ENCODE measurements at regions of chrX and their contacts with region 1.

Region 1: GRCh38 chrX:10007621-10008020 is 40.5 kb downstream of the CLDN34 start:
- DNase-seq: no peak
- ATAC-seq: peak; percentile 1; the same call in 2 of the 3 replicates
- H3K4me3 ChIP-seq: no peak overlapping the region
- H3K27ac ChIP-seq: no peak overlapping the region
- H3K4me1 ChIP-seq: peaks cover 9% of the 10 kb centered on the region
- H3K27me3 ChIP-seq: no peaks in the 10 kb centered on the region
- CTCF ChIP-seq: no peak
- EP300 ChIP-seq: no peak
- POLR2A ChIP-seq: no peak
- RAD21 ChIP-seq: no peak

Region 2: GRCh38 chrX:9829308-9830267 is 178.0 kb before region 1 on chrX:
- CTCF ChIA-PET with region 1: no interaction called
- POLR2A ChIA-PET with region 1: no interaction called
- RAD21 ChIA-PET with region 1: no interaction called
- SMC1A ChIA-PET with region 1: no interaction called
- in situ Hi-C with region 1: no loop called
- intact Hi-C with region 1: no loop called
- DNase-seq: peak; percentile 47
- ATAC-seq: peak; percentile 95
- H3K4me3 ChIP-seq: no peak overlapping the region
- H3K27ac ChIP-seq: peak overlapping the region; percentile 61
- H3K4me1 ChIP-seq: peaks cover 11% of the 10 kb centered on the region
- H3K27me3 ChIP-seq: no peaks in the 10 kb centered on the region; a peak in 2 of 4 replicates
- CTCF ChIP-seq: no peak
- EP300 ChIP-seq: peak; percentile 68 to 90; a peak in 2 of 4 replicates
- POLR2A ChIP-seq: no peak
- RAD21 ChIP-seq: no peak

Region 3: DNA sequence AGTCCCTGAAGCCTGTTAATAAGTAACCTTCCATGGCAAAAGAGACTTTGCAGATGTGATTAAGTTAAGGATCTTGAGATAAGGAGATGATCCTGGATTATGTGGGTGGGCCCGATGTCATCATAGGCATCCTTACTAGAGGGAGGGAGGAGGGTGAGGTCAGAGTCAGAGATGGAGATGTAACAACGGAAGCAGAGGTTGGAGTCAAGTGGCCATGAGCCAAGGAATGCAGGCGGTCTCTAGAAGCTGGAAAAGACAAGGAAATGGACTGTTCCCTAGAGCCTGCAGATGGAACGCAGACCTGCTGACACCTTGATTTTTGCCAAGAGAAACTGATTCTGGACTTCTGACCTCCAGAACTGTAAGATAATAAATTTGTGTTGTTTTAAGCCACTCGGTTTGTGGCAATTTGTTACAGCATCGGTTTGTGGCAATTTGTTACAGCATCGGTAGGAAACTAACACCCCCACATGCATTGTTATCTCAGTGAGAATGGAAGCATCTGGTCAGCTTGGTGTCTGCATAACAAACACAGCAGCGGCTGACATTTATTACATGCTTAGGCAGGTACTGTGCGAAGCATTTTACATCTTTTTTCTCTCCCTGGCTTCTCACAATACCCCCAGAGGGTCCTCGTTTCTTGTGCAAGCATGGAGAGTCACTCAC is 15.1 kb after region 1 on chrX:
- CTCF ChIA-PET with region 1: interaction called, 5 read pairs
- POLR2A ChIA-PET with region 1: interaction called, 7 read pairs
- RAD21 ChIA-PET with region 1: interaction called, 15 read pairs
- SMC1A ChIA-PET with region 1: interaction called, 16 read pairs
- in situ Hi-C with region 1: no loop called
- intact Hi-C with region 1: no loop called
- DNase-seq: no peak
- ATAC-seq: no peak
- H3K4me3 ChIP-seq: no peak overlapping the region
- H3K27ac ChIP-seq: no peak overlapping the region
- H3K4me1 ChIP-seq: no peaks in the 10 kb centered on the region
- H3K27me3 ChIP-seq: no peaks in the 10 kb centered on the region
- CTCF ChIP-seq: no peak
- EP300 ChIP-seq: no peak
- POLR2A ChIP-seq: no peak
- RAD21 ChIP-seq: no peak

Region 4: GRCh38 chrX:10039821-10040793 is 32.5 kb after region 1 on chrX:
- CTCF ChIA-PET with region 1: no interaction called
- POLR2A ChIA-PET with region 1: no interaction called
- RAD21 ChIA-PET with region 1: no interaction called
- SMC1A ChIA-PET with region 1: no interaction called
- in situ Hi-C with region 1: no loop called
- intact Hi-C with region 1: no loop called
- DNase-seq: no peak
- ATAC-seq: no peak
- H3K4me3 ChIP-seq: no peak overlapping the region
- H3K27ac ChIP-seq: no peak overlapping the region
- H3K4me1 ChIP-seq: no peaks in the 10 kb centered on the region
- H3K27me3 ChIP-seq: no peaks in the 10 kb centered on the region; a peak in 1 of 4 replicates
- CTCF ChIP-seq: no peak
- EP300 ChIP-seq: no peak
- POLR2A ChIP-seq: no peak
- RAD21 ChIP-seq: no peak

Region 5: GRCh38 chrX:10052906-10053625 is 45.4 kb after region 1 on chrX:
- CTCF ChIA-PET with region 1: no interaction called
- POLR2A ChIA-PET with region 1: no interaction called
- RAD21 ChIA-PET with region 1: interaction called, 10 read pairs
- SMC1A ChIA-PET with region 1: interaction called, 4 read pairs
- in situ Hi-C with region 1: no loop called
- intact Hi-C with region 1: no loop called
- DNase-seq: no peak
- ATAC-seq: peak; percentile 59
- H3K4me3 ChIP-seq: no peak overlapping the region
- H3K27ac ChIP-seq: no peak overlapping the region
- H3K4me1 ChIP-seq: no peaks in the 10 kb centered on the region
- H3K27me3 ChIP-seq: peaks cover 0 to 4% of the 10 kb centered on the region in 2 experiments; a peak in 1 of 4 replicates
- CTCF ChIP-seq: no peak
- EP300 ChIP-seq: no peak
- POLR2A ChIP-seq: no peak
- RAD21 ChIP-seq: no peak; the same call in 1 of the 2 replicates

Region 6: DNA sequence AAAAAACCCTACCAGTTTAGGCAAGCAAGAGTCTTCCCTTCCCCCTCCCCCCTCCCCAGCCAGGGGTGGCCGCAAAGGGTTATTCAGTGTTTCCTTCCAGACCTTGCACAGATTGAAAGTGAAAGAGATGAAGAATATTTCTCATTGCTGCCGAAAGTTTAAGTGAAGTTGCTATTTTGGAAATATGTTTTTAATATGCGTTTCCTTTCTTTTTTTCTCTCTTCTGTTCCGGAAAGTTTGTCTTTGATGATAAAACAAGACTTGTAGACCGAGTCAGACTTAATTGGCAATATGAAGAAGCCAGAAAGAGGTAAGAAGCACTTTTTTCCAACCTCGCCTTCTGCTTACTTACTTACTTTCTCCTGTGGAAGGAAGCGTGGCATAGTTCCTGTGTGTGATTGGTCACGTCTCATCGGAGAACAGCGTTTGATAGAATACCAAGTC is 90.7 kb after region 1 on chrX:
- CTCF ChIA-PET with region 1: interaction called, 17 read pairs
- POLR2A ChIA-PET with region 1: interaction called, 16 read pairs
- RAD21 ChIA-PET with region 1: interaction called, 24 read pairs
- SMC1A ChIA-PET with region 1: interaction called, 21 read pairs
- in situ Hi-C with region 1: no loop called
- intact Hi-C with region 1: no loop called
- DNase-seq: peak; percentile 51
- ATAC-seq: peak; percentile 87
- H3K4me3 ChIP-seq: peak overlapping the region; percentile 50
- H3K27ac ChIP-seq: peak overlapping the region; percentile 77
- H3K4me1 ChIP-seq: peaks cover 11% of the 10 kb centered on the region
- H3K27me3 ChIP-seq: no peaks in the 10 kb centered on the region; a peak in 1 of 4 replicates
- CTCF ChIP-seq: no peak
- EP300 ChIP-seq: peak in 1 of 2 experiments; percentile 63; a peak in 1 of 4 replicates
- POLR2A ChIP-seq: no peak
- RAD21 ChIP-seq: 0 out of 2 replicates have a peak, but pooled peaks have one; percentile 19

Region 7: GRCh38 chrX:10111364-10112148 is 103.9 kb after region 1 on chrX:
- CTCF ChIA-PET with region 1: interaction called, 57 read pairs
- POLR2A ChIA-PET with region 1: interaction called, 23 read pairs
- RAD21 ChIA-PET with region 1: interaction called, 424 read pairs
- SMC1A ChIA-PET with region 1: interaction called, 281 read pairs
- in situ Hi-C with region 1: no loop called
- intact Hi-C with region 1: no loop called
- DNase-seq: peak; percentile 59
- ATAC-seq: peak; percentile 69
- H3K4me3 ChIP-seq: peak overlapping the region; percentile 18; the same call in 1 of the 2 replicates
- H3K27ac ChIP-seq: peak overlapping the region; percentile 87
- H3K4me1 ChIP-seq: peaks cover 47% of the 10 kb centered on the region
- H3K27me3 ChIP-seq: no peaks in the 10 kb centered on the region; a peak in 1 of 4 replicates
- CTCF ChIP-seq: no peak
- EP300 ChIP-seq: peak; percentile 46 to 63; a peak in 3 of 4 replicates
- POLR2A ChIP-seq: peak; percentile 60
- RAD21 ChIP-seq: no peak